ENCODE measurements at regions of chr1 and their contacts with region 1.

Region 1: DNA sequence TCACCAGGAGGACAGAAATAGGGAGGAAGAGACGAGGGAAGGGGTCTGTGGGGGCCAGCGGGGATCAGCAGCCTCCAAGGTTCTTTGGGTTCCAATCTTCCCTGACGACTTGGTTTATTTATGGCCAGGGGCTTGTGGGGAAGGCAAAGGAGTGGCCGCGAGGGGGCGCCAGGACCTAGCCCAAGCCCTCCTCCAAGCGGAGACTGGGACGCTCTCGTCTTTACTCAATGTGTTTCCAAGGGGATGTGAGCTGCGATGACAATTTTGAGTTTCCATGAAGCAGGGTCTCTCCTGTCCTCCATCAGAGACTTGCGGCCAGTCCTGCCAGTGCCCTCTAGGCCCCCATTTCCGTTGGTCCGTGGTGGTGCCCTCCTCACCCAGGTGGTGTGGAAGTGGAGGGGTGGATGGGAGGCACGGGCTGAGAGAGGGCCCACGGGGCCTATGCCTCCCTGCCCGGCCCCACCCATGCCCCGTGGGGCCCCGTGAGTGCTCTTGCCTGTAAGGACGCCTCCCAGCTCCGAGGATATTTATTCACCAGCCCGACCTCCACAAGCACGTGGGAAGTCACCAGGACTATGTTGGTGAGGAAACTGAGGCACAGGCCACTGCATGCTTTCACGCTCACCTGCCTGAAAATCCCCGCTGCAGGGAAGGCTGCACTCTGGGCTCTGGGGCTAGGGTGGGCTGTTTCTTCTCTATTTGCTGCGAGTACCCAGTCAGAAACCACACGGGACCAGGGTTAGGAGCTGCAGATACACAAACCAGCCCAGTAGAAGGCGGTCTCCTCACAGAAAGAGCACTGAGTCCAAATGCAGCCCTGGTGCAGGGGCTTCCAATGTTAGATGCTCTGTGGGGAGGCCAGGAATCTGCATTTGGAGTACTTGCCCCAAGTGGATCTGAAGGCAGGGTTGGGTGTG is 26.5 kb downstream of the DMRTB1 start:
- H3K4me3 Mint-ChIP-seq: no peak overlapping the region
- H3K27ac Mint-ChIP-seq: no peak overlapping the region
- H3K4me1 Mint-ChIP-seq: no peaks in the 10 kb centered on the region
- H3K27me3 Mint-ChIP-seq: peaks cover 7% of the 10 kb centered on the region

Region 2: GRCh38 chr1:53470155-53470554 is 15.6 kb before region 1 on chr1:
- intact Hi-C with region 1: no loop called
- H3K4me3 Mint-ChIP-seq: no peak overlapping the region
- H3K27ac Mint-ChIP-seq: no peak overlapping the region
- H3K4me1 Mint-ChIP-seq: peaks cover 6% of the 10 kb centered on the region
- H3K27me3 Mint-ChIP-seq: no peaks in the 10 kb centered on the region

Region 3: DNA sequence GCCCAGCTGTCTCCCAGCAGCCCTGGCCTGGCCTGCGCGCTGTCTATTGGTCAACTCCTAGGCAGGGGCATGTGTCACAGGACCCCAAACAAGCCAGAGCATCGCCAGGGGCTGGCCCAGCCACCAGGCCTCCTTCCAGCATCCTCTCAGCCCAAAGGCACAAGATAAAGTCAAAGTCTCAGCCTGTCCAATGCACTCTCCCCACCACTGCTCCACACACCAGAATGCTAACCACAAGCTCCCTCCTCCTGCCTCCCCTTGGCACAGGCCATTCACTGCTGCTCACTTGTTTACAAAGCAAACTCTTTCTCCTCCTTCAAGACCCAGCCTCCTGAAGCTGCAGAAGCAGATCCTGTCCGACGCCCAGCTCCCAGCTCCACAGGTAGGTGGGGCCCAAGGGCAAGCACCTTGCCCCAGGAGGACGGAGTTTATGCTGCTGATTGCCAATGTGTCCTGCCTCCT is 106.8 kb after region 1 on chr1:
- intact Hi-C with region 1: no loop called
- H3K4me3 Mint-ChIP-seq: no peak overlapping the region
- H3K27ac Mint-ChIP-seq: no peak overlapping the region
- H3K4me1 Mint-ChIP-seq: no peaks in the 10 kb centered on the region
- H3K27me3 Mint-ChIP-seq: no peaks in the 10 kb centered on the region

Region 4: GRCh38 chr1:53754484-53755312 is 269.0 kb after region 1 on chr1:
- intact Hi-C with region 1: loop called (anchors 1 kb)
- H3K4me3 Mint-ChIP-seq: no peak overlapping the region
- H3K27ac Mint-ChIP-seq: no peak overlapping the region
- H3K4me1 Mint-ChIP-seq: no peaks in the 10 kb centered on the region
- H3K27me3 Mint-ChIP-seq: no peaks in the 10 kb centered on the region

Measured in dendritic cell treated with granulocyte-macrophage colony-stimulating factor and Interleukin-4, amounts not matched to agents 40 ng/mL and 50 ng/mL, for 4 days (primary cell).